Posterior vena cava (tissue), 2 donors: ENCODE measurements at regions of chr5 and their contacts with region 1.

Region 1: DNA sequence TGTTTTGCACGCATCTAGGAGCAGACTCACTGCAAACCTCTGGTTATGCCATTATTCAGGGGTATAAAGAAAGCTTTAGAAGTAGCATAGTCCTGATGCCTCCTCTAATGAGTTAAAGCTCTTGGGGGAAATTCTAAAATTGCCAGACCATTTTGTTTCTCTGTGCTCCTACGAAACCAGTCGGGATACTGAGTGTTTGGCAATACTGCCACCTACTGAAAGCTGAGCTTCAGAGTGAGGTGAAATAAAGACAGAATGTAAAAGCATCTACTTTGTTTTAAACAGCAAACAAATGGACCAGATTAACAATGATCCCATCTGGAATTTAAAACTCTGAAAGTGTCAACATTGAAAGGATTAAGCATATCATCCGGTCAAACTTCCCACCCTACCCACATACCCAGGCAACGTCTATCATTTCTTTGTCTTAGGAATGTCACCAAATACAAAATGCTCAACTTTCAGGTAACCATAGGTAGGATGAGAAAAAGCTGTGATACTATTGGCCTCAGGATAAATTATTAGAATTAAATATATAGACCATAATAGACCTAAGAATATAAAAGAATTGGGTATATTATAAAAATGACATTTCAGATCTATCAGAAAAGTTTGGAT is 77.8 kb upstream of the SHISAL2B start:
- DNase-seq: no peak

Region 2: DNA sequence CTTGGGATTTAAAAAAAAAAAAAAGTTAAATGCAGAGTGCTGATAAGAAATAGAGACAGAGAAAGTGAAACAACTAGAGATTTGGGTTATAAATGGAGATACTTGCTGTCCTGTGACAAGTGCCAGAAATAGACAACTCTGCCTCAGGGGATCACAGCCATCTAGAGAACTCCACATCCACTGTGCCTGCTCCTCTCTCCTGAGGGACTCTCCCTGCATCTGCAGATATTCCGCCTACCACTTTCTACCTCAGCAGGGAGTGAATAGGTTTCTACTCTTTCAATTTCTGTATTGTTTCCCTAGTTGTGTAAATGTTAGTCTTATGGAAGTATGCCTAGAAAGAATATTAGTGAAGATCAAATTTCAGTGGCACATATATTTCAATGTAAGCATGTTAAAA is 957.4 kb before region 1 on chr5:
- intact Hi-C with region 1: no loop called
- DNase-seq: no peak

Region 3: GRCh38 chr5:64074533-64074932 is 537.9 kb before region 1 on chr5:
- intact Hi-C with region 1: loop called in 1 of 2 experiments (anchors 10 kb)
- DNase-seq: no peak

Region 4: GRCh38 chr5:64147849-64148441 is 464.5 kb before region 1 on chr5:
- intact Hi-C with region 1: loop called in 1 of 2 experiments (anchors 10 kb)
- DNase-seq: peak; percentile 86

Region 5: GRCh38 chr5:64229163-64229774 is 383.2 kb before region 1 on chr5:
- intact Hi-C with region 1: loop called in 1 of 2 experiments (anchors 5 kb)
- DNase-seq: no peak

Region 6: GRCh38 chr5:64557911-64558310 is 54.5 kb before region 1 on chr5:
- intact Hi-C with region 1: no loop called
- DNase-seq: no peak